ENCODE measurements at regions of chr18 and their contacts with region 1.

Region 1: DNA sequence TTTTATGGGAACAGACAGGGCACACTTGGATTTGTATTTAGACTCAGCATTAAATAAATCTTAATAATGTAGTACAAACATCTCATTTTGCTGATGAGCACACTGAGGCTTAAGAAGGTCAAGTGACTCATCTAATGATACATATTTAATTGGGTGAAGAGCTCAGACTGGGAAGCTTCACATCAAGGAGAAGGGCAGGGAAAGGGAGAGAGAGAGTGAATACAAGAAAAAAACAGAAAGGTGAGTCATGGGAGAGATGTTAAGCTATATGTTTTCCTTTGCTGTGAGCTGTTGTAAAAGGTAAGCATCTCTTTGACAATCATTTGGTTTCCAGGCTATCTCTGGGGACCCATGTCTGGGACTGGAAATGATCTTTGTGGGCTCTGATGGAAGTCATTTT is 277.8 kb downstream of the SETBP1 start:
- DNase-seq: no peak
- H3K4me3 Mint-ChIP-seq: no peak overlapping the region
- H3K27ac Mint-ChIP-seq: no peak overlapping the region
- H3K4me1 Mint-ChIP-seq: no peaks in the 10 kb centered on the region
- H3K27me3 Mint-ChIP-seq: peaks cover 12% of the 10 kb centered on the region

Region 2: GRCh38 chr18:44996261-44996660 is 37.8 kb after region 1 on chr18:
- CTCF ChIA-PET with region 1: no interaction called
- POLR2A ChIA-PET with region 1: no interaction called
- intact Hi-C with region 1: loop called (anchors 1 kb)
- DNase-seq: no peak
- H3K4me3 Mint-ChIP-seq: no peak overlapping the region
- H3K27ac Mint-ChIP-seq: no peak overlapping the region
- H3K4me1 Mint-ChIP-seq: no peaks in the 10 kb centered on the region
- H3K27me3 Mint-ChIP-seq: no peaks in the 10 kb centered on the region

Measured in activated CD4-positive, alpha-beta memory T cell treated with anti-CD3 and anti-CD28 coated beads for 36 hours (primary cell).